MCF 10A (cell line): ENCODE measurements at regions of chr10 and their contacts with region 1.

Region 1: GRCh38 chr10:91006001-91006751 is 85.3 kb upstream of the ANKRD1 start:
- DNase-seq: peak; percentile 73
- H3K4me3 Mint-ChIP-seq: no peak overlapping the region
- H3K27ac Mint-ChIP-seq: no peak overlapping the region
- H3K4me1 Mint-ChIP-seq: no peaks in the 10 kb centered on the region
- H3K27me3 Mint-ChIP-seq: no peaks in the 10 kb centered on the region
- CTCF ChIP-seq: peak; percentile 80

Region 2: GRCh38 chr10:91017198-91017597 is 11.0 kb after region 1 on chr10:
- CTCF ChIA-PET with region 1: interaction called, 25 read pairs
- POLR2A ChIA-PET with region 1: no interaction called
- intact Hi-C with region 1: no loop called
- DNase-seq: no peak
- H3K4me3 Mint-ChIP-seq: no peak overlapping the region
- H3K27ac Mint-ChIP-seq: no peak overlapping the region
- H3K4me1 Mint-ChIP-seq: no peaks in the 10 kb centered on the region
- H3K27me3 Mint-ChIP-seq: peaks cover 25% of the 10 kb centered on the region
- CTCF ChIP-seq: no peak

Region 3: GRCh38 chr10:91088300-91089140 is 82.3 kb after region 1 on chr10:
- CTCF ChIA-PET with region 1: interaction called, 14 read pairs
- POLR2A ChIA-PET with region 1: no interaction called
- intact Hi-C with region 1: no loop called
- DNase-seq: peak; percentile 27
- H3K4me3 Mint-ChIP-seq: no peak overlapping the region
- H3K27ac Mint-ChIP-seq: no peak overlapping the region
- H3K4me1 Mint-ChIP-seq: peaks cover 5% of the 10 kb centered on the region
- H3K27me3 Mint-ChIP-seq: no peaks in the 10 kb centered on the region
- CTCF ChIP-seq: peak; percentile 28

Region 4: DNA sequence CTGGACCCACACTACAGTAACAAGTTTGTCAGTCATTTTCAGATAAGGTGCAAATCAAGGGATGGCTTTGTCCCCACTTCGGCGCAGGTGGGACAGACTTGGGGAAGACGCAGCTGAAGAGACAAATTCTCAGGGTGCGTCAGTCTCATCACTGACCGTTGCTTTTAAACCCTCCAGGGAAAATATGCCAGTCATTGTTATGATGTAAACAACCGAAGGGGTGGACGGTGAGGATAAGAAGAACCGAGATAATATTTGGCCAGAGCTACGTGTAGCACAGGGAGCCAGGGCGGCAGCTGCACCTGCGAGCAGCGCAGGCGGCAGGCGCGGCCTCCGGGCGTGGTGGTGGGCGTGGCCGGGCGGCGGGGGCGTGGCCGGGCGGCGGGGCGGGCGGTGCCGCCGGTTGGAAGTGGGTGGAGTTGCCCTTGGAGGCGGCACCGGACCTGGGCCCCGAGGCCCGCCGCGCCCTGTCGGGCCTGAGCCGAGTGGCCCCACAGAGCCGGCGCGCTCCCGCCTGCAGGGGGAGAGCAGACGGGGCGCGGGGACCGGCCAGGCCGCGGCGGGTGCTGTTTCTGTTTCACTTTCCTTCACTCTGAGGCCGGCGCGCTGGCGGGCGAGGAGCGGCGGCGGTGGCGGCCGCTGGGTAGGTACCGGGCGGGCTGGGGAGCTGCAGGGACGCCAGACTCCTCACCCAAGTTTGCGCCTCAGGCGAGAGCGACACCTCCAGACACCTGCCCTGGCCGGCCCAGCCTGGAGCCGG is 214.2 kb after region 1 on chr10 and contains the start of gene PCGF5:
- CTCF ChIA-PET with region 1: no interaction called
- POLR2A ChIA-PET with region 1: no interaction called
- intact Hi-C with region 1: no loop called
- DNase-seq: peak; percentile 89
- H3K4me3 Mint-ChIP-seq: peak within 1 kb of the TSS; percentile 79
- H3K27ac Mint-ChIP-seq: peak within 1 kb of the TSS; percentile 80
- H3K4me1 Mint-ChIP-seq: peaks cover 22% of the 10 kb centered on the region
- H3K27me3 Mint-ChIP-seq: no peaks in the 10 kb centered on the region
- CTCF ChIP-seq: peak; percentile 9
- total RNA-seq, gene PCGF5: 25.8 and 34.6 TPM in 2 replicates

Region 5: DNA sequence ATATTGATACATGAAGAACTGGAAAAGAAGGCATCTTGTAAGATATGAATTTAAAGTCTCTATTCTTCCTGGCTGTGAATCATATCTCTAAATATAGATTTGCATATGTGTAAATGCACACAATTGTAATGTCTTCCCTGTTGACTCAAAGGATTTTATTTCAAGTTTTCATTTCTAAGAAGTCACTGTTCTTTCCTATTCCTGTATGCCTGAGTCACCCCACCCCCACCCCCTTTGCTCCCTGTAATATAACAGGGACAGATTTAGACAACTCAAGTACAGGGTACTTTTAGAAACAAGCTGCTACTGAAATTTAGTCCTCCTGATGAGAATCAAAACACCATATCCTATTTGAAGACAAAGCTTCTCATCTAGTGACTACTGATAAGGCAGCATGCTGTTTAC is 361.0 kb after region 1 on chr10:
- CTCF ChIA-PET with region 1: interaction called, 3 read pairs
- POLR2A ChIA-PET with region 1: no interaction called
- intact Hi-C with region 1: loop called (anchors 2 kb)
- DNase-seq: no peak
- H3K4me3 Mint-ChIP-seq: no peak overlapping the region
- H3K27ac Mint-ChIP-seq: no peak overlapping the region
- H3K4me1 Mint-ChIP-seq: peaks cover 9% of the 10 kb centered on the region
- H3K27me3 Mint-ChIP-seq: no peaks in the 10 kb centered on the region
- CTCF ChIP-seq: no peak